ENCODE measurements at regions of chr10 and their contacts with region 1.

Region 1: GRCh38 chr10:80580638-80581468 is 43.2 kb downstream of the SH2D4B start:
- DNase-seq: no peak
- H3K4me3 ChIP-seq: no peak overlapping the region
- H3K27ac ChIP-seq: no peak overlapping the region
- H3K4me1 ChIP-seq: no peaks in the 10 kb centered on the region
- H3K27me3 ChIP-seq: no peaks in the 10 kb centered on the region
- CTCF ChIP-seq: no peak

Region 2: DNA sequence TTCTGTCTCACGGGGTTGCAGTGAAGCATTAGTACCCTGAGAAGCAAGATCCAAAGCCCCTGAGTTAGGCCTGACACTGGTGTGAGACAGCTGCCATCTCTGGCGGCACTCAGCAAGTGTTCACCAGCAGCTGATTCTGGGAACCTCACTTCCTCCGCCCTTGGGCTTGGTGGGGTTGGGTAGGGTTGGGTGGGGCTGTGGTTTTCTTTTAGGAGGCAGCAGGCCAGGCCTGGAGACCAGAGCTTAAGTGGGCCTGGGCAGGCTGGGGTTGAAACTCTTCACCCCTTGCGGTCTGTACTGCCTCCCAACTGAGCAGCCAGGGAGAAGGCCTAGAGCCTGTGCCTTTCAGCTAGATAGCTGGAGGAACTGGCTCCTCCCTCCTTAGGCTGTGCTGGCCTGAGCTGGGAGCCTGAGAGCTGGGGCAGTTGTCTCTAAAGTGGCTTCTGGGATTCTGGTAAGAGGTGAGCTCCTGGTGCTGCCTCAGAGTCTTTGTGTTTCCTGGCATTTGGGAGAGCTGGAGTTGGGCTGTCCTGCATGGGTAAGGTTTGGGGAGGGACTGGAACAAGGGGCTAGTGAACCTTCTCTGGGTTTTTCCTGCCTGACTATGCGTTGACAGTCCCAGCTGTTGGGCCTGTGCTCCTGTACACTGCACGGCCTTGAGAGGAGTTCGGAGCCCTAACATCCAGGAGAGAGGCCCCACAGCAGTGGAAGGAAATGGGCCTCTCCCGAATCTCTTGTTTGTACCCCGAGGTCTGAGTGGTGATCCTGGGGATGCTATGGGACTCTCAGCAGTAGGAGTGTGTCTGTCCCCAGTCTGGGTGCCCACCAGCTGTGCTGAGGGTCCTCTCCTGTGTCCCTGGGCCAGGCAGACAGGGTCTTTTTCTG is 121.6 kb before region 1 on chr10:
- CTCF ChIA-PET with region 1: no interaction called
- dilution Hi-C with region 1: no loop called
- in situ Hi-C with region 1: no loop called
- intact Hi-C with region 1: no loop called
- DNase-seq: peak; percentile 93
- H3K4me3 ChIP-seq: peak overlapping the region in 2 of 3 experiments; percentile 10 to 27
- H3K27ac ChIP-seq: peak overlapping the region; percentile 59
- H3K4me1 ChIP-seq: peaks cover 81% of the 10 kb centered on the region
- H3K27me3 ChIP-seq: no peaks in the 10 kb centered on the region
- CTCF ChIP-seq: peak in 1 of 2 donors; percentile 8

Region 3: GRCh38 chr10:80535671-80536365 is 45.0 kb before region 1 on chr10:
- CTCF ChIA-PET with region 1: no interaction called
- dilution Hi-C with region 1: no loop called
- in situ Hi-C with region 1: no loop called
- intact Hi-C with region 1: loop called (anchors 5 kb)
- DNase-seq: peak; percentile 34
- H3K4me3 ChIP-seq: peak overlapping the region; percentile 9 to 50 (median 35)
- H3K27ac ChIP-seq: peak overlapping the region; percentile 13
- H3K4me1 ChIP-seq: peaks cover 25% of the 10 kb centered on the region
- H3K27me3 ChIP-seq: no peaks in the 10 kb centered on the region
- CTCF ChIP-seq: peak; percentile 39 to 72